PC-3 (cell line): ENCODE measurements at regions of chr1 and their contacts with region 1.

Region 1: GRCh38 chr1:79079770-79080169 is 73.2 kb upstream of the ADGRL4 start:
- DNase-seq: peak; percentile 90
- ATAC-seq: peak; percentile 91
- H3K4me3 ChIP-seq: no peak overlapping the region
- H3K27ac ChIP-seq: peak overlapping the region; percentile 21
- H3K4me1 ChIP-seq: peaks cover 16% of the 10 kb centered on the region
- H3K27me3 ChIP-seq: no peaks in the 10 kb centered on the region
- CTCF ChIP-seq: no peak

Region 2: DNA sequence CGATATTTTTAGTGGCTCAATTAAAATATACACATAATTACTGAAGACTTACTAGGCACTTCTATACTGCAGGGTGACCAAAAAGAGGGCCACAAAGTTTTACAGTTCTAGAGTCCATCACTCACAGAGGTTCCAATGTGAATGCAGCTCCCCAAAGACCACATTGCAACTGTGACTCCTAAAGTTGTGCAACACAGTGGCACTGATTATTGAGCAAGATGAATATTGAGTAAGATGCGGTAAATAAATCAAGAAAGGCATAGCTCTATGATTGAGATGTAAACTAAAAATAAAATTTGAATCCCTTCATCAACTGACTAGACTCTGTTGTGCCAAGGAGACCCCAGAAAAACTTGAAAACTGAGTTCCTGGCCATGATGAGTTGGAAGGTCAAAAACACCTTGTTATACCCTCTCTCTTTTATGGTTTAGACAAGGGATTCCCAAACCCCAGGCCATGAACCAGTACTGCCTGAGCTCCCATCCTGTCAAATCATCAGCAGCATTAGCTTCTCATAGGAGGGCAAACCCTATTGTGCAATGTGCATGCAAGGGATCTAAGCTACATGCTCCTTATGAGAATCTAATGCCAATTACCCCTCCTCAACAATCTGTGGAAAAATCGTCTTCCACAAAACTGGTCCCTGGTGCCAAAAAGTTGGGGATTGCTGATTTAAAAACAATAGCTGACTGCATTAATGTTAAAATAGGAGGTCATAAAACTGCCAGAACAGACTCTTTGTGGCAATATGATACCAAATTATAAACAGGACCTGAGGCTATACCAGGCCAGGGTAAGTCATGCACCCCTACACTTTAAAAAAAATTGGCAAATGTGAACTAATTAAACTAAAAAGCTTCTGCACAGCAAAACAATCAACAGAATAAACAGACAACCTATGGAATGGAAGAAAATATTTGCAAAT is 167.6 kb before region 1 on chr1:
- CTCF ChIA-PET with region 1: no interaction called
- POLR2A ChIA-PET with region 1: no interaction called
- intact Hi-C with region 1: loop called (anchors 10 kb)
- DNase-seq: no peak
- ATAC-seq: no peak
- H3K4me3 ChIP-seq: no peak overlapping the region
- H3K27ac ChIP-seq: no peak overlapping the region
- H3K4me1 ChIP-seq: no peaks in the 10 kb centered on the region
- H3K27me3 ChIP-seq: no peaks in the 10 kb centered on the region
- CTCF ChIP-seq: no peak

Region 3: GRCh38 chr1:79044974-79045650 is 34.7 kb before region 1 on chr1:
- CTCF ChIA-PET with region 1: no interaction called
- POLR2A ChIA-PET with region 1: no interaction called
- intact Hi-C with region 1: no loop called
- DNase-seq: no peak
- ATAC-seq: no peak
- H3K4me3 ChIP-seq: no peak overlapping the region
- H3K27ac ChIP-seq: no peak overlapping the region
- H3K4me1 ChIP-seq: peaks cover 17% of the 10 kb centered on the region
- H3K27me3 ChIP-seq: no peaks in the 10 kb centered on the region
- CTCF ChIP-seq: peak; percentile 32; the same call in 1 of the 2 replicates

Region 4: DNA sequence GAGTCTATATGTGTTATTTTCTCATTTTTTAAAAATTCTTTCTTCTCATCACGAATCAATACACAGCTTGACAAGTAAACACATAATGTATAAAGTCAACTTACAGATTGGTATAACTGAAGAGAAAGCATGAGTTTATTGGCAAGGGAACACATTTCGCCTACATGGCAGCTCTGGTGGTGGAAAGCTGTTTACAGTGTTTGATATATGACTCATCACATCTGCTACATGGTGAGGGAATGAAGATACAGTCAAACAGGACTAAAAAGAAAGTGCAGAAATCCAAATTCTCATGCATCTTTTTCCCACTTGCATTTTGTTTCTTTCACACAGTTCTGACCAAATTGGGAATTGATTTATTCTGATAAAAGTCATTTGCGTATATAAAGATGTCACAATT is 49.0 kb after region 1 on chr1:
- CTCF ChIA-PET with region 1: no interaction called
- POLR2A ChIA-PET with region 1: no interaction called
- intact Hi-C with region 1: loop called (anchors 1 kb)
- DNase-seq: peak; percentile 83
- ATAC-seq: peak; percentile 99
- H3K4me3 ChIP-seq: no peak overlapping the region
- H3K27ac ChIP-seq: peak overlapping the region; percentile 58
- H3K4me1 ChIP-seq: peaks cover 16% of the 10 kb centered on the region
- H3K27me3 ChIP-seq: no peaks in the 10 kb centered on the region
- CTCF ChIP-seq: no peak

Region 5: GRCh38 chr1:79150576-79150975 is 70.8 kb after region 1 on chr1:
- CTCF ChIA-PET with region 1: no interaction called
- POLR2A ChIA-PET with region 1: no interaction called
- intact Hi-C with region 1: loop called (anchors 5 kb)
- DNase-seq: no peak
- ATAC-seq: no peak
- H3K4me3 ChIP-seq: no peak overlapping the region
- H3K27ac ChIP-seq: no peak overlapping the region
- H3K4me1 ChIP-seq: peaks cover 18% of the 10 kb centered on the region
- H3K27me3 ChIP-seq: no peaks in the 10 kb centered on the region
- CTCF ChIP-seq: no peak

Region 6: DNA sequence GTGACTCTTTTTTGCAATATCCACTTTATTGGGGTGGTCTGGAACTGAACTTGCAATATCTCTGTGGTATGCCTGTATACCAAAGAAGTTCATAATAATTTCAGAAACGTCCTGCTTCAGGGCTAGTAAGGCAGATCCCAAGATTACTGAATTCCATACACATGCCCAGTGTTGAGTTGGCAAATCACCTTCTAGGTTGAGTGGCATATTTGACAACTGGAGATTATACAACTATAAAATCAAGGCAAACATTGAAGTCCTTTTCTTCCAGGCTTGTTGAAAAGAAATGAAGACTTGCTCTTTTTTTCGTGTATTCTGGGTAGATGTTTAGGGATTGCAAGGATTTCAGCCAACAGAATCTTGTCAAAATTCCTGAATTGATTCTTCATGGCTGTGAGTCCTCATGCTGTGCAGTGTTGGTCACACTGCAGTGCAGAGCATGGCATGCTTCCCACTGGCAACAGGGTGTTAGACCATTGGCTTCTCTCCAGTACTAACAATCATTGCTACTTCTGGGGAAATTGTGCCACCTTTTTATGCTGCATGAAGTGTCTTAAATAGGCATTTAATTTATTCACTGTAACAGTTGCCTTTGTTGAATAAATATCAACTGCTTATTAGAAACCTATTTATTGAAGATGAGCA is 293.8 kb after region 1 on chr1:
- CTCF ChIA-PET with region 1: no interaction called
- POLR2A ChIA-PET with region 1: no interaction called
- intact Hi-C with region 1: no loop called
- DNase-seq: no peak
- ATAC-seq: peak; percentile 61
- H3K4me3 ChIP-seq: no peak overlapping the region
- H3K27ac ChIP-seq: no peak overlapping the region
- H3K4me1 ChIP-seq: no peaks in the 10 kb centered on the region
- H3K27me3 ChIP-seq: no peaks in the 10 kb centered on the region
- CTCF ChIP-seq: no peak